ENCODE measurements at regions of chr12 and their contacts with region 1.

Region 1: GRCh38 chr12:30985814-30986452 is 59.4 kb downstream of the TSPAN11 start:
- DNase-seq: peak; percentile 65
- H3K4me3 ChIP-seq: no peak overlapping the region
- H3K27ac ChIP-seq: no peak overlapping the region
- H3K4me1 ChIP-seq: no peaks in the 10 kb centered on the region
- H3K27me3 ChIP-seq: no peaks in the 10 kb centered on the region
- CTCF ChIP-seq: peak; percentile 75 to 95
- POLR2A ChIP-seq: no peak

Region 2: GRCh38 chr12:30126944-30127343 is 859.0 kb before region 1 on chr12:
- CTCF ChIA-PET with region 1: no interaction called
- POLR2A ChIA-PET with region 1: no interaction called
- dilution Hi-C with region 1: no loop called
- intact Hi-C with region 1: no loop called
- DNase-seq: no peak
- H3K4me3 ChIP-seq: no peak overlapping the region
- H3K27ac ChIP-seq: no peak overlapping the region
- H3K4me1 ChIP-seq: no peaks in the 10 kb centered on the region
- H3K27me3 ChIP-seq: no peaks in the 10 kb centered on the region
- CTCF ChIP-seq: no peak
- POLR2A ChIP-seq: no peak

Region 3: GRCh38 chr12:30926243-30927221 is 59.4 kb before region 1 on chr12 and contains the start of gene TSPAN11:
- CTCF ChIA-PET with region 1: interaction called, 7 read pairs
- POLR2A ChIA-PET with region 1: interaction called, 9 read pairs
- dilution Hi-C with region 1: no loop called
- intact Hi-C with region 1: loop called (anchors 5 kb)
- DNase-seq: peak; percentile 48
- H3K4me3 ChIP-seq: peak within 1 kb of the TSS; percentile 24 to 41 (median 33)
- H3K27ac ChIP-seq: peak within 1 kb of the TSS; percentile 7
- H3K4me1 ChIP-seq: peaks cover 32% of the 10 kb centered on the region
- H3K27me3 ChIP-seq: no peaks in the 10 kb centered on the region
- CTCF ChIP-seq: no peak
- POLR2A ChIP-seq: no peak
- total RNA-seq, gene TSPAN11: 3.9 and 4.5 TPM in 2 replicates

Region 4: DNA sequence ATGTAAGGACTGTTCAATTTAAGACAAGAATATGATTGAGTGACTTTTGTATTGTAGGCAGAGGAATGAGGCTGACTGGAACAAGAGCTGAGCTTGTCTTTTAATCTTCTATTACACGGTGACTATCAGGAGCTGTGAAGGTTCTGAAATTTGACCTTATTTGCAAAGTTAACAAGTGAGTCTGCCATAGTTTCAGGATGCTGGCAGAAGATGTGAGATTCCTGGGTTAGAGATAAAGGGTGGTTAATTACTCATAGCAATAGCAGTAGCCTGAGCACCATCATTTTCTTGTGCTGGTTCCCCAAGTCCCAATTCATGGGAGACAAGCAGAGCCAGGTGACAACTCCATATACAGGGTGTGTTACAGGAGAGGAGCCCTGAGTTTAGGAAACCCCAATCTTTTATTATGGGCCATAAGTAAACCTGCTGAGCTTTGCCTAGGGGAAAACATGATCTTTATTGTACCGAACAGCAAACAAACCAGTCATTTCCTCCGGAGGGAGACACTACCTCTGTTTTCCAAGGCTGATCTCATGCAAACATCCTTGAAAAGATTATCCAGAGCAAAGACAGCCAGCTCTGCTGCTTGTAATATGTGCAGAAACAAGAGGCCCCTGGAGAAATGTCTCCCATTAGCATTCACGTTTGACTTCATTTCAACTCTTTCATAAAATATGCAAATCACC is 36.0 kb after region 1 on chr12:
- CTCF ChIA-PET with region 1: interaction called, 18 read pairs
- POLR2A ChIA-PET with region 1: no interaction called
- dilution Hi-C with region 1: no loop called
- intact Hi-C with region 1: no loop called
- DNase-seq: peak; percentile 52
- H3K4me3 ChIP-seq: no peak overlapping the region
- H3K27ac ChIP-seq: no peak overlapping the region
- H3K4me1 ChIP-seq: peaks cover 35% of the 10 kb centered on the region
- H3K27me3 ChIP-seq: no peaks in the 10 kb centered on the region
- CTCF ChIP-seq: no peak
- POLR2A ChIP-seq: no peak

Region 5: DNA sequence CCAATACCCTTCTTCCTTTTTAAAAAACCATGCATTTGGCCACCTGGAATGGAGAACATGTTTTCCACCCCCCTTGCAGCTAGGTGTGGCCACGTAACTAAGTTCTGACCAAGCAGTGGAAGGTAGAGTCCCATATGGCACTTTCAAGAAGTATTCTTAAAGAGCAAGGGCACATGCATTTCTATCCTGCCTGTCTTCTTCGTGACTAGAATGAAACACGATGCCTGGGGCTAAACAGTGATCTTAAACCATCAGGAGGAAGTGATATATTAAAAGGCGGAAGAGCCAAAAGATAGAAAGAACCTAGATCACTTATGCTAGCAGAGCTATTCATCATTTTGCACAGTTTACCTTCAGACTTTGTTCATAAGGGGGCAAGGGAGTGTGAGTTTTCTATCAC is 71.7 kb after region 1 on chr12:
- CTCF ChIA-PET with region 1: interaction called, 16 read pairs
- POLR2A ChIA-PET with region 1: no interaction called
- dilution Hi-C with region 1: no loop called
- intact Hi-C with region 1: no loop called
- DNase-seq: no peak
- H3K4me3 ChIP-seq: no peak overlapping the region
- H3K27ac ChIP-seq: no peak overlapping the region
- H3K4me1 ChIP-seq: no peaks in the 10 kb centered on the region
- H3K27me3 ChIP-seq: no peaks in the 10 kb centered on the region
- CTCF ChIP-seq: no peak
- POLR2A ChIP-seq: no peak

Region 6: GRCh38 chr12:31267966-31268365 is 282.0 kb after region 1 on chr12:
- CTCF ChIA-PET with region 1: interaction called, 11 read pairs
- POLR2A ChIA-PET with region 1: no interaction called
- dilution Hi-C with region 1: no loop called
- intact Hi-C with region 1: no loop called
- DNase-seq: no peak
- H3K4me3 ChIP-seq: no peak overlapping the region
- H3K27ac ChIP-seq: no peak overlapping the region
- H3K4me1 ChIP-seq: no peaks in the 10 kb centered on the region
- H3K27me3 ChIP-seq: no peaks in the 10 kb centered on the region
- CTCF ChIP-seq: no peak
- POLR2A ChIP-seq: no peak